H1 (cell line): ENCODE measurements at regions of chr12 and their contacts with region 1.

Region 1: GRCh38 chr12:56839915-56840325 is 76.8 kb downstream of the HSD17B6 start:
- DNase-seq: peak; percentile 51 to 72
- H3K4me3 ChIP-seq: no peak overlapping the region
- H3K27ac ChIP-seq: no peak overlapping the region
- H3K4me1 ChIP-seq: no peaks in the 10 kb centered on the region
- H3K27me3 ChIP-seq: no peaks in the 10 kb centered on the region
- CTCF ChIP-seq: peak; percentile 86 to 96 (median 94)
- EP300 ChIP-seq: no peak
- POLR2A ChIP-seq: no peak
- RAD21 ChIP-seq: peak; percentile 96 to 98

Region 2: GRCh38 chr12:56759263-56759908 is 80.5 kb before region 1 on chr12:
- CTCF ChIA-PET with region 1: interaction called, 11 read pairs
- POLR2A ChIA-PET with region 1: no interaction called
- DNase-seq: no peak
- H3K4me3 ChIP-seq: no peak overlapping the region
- H3K27ac ChIP-seq: no peak overlapping the region
- H3K4me1 ChIP-seq: no peaks in the 10 kb centered on the region
- H3K27me3 ChIP-seq: no peaks in the 10 kb centered on the region
- CTCF ChIP-seq: no peak
- EP300 ChIP-seq: no peak
- POLR2A ChIP-seq: no peak
- RAD21 ChIP-seq: no peak

Region 3: GRCh38 chr12:56851462-56851861 is 11.5 kb after region 1 on chr12:
- CTCF ChIA-PET with region 1: interaction called, 12 read pairs
- POLR2A ChIA-PET with region 1: no interaction called
- DNase-seq: no peak
- H3K4me3 ChIP-seq: no peak overlapping the region
- H3K27ac ChIP-seq: no peak overlapping the region
- H3K4me1 ChIP-seq: no peaks in the 10 kb centered on the region
- H3K27me3 ChIP-seq: no peaks in the 10 kb centered on the region
- CTCF ChIP-seq: no peak
- EP300 ChIP-seq: no peak
- POLR2A ChIP-seq: no peak
- RAD21 ChIP-seq: no peak

Region 4: DNA sequence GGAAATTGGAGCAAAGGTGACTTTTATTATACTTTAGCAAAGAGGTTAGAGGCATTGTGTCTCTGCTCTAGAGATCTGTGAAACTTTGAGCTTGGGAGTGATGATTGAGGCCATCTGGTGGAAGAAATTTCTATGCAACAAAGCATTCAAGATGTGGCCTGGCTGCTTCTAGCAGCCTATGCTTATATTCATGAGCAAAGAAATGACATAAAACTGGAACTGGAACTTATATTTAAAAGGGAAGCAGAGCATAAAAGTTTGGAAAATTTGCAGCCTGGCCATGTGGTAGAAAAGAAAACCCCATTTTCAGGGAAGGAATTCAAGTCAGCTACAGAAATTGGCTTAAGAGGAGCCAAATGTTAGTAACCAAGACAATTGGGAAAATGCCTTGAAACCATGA is 23.9 kb after region 1 on chr12:
- CTCF ChIA-PET with region 1: no interaction called
- POLR2A ChIA-PET with region 1: no interaction called
- DNase-seq: no peak
- H3K4me3 ChIP-seq: no peak overlapping the region
- H3K27ac ChIP-seq: no peak overlapping the region
- H3K4me1 ChIP-seq: no peaks in the 10 kb centered on the region
- H3K27me3 ChIP-seq: no peaks in the 10 kb centered on the region
- CTCF ChIP-seq: no peak
- EP300 ChIP-seq: no peak
- POLR2A ChIP-seq: no peak
- RAD21 ChIP-seq: no peak